Activated CD4-positive, alpha-beta T cell treated with anti-CD3 and anti-CD28 coated beads for 36 hours (primary cell): ENCODE measurements at regions of chr12 and their contacts with region 1.

Region 1: GRCh38 chr12:87233671-87234070 is 795.5 kb downstream of the C12orf50 start:
- DNase-seq: no peak
- ATAC-seq: no peak
- H3K4me3 Mint-ChIP-seq: no peak overlapping the region
- H3K27ac Mint-ChIP-seq: no peak overlapping the region
- H3K4me1 Mint-ChIP-seq: no peaks in the 10 kb centered on the region
- H3K27me3 Mint-ChIP-seq: no peaks in the 10 kb centered on the region

Region 2: GRCh38 chr12:86373813-86374212 is 859.9 kb before region 1 on chr12:
- CTCF ChIA-PET with region 1: no interaction called
- POLR2A ChIA-PET with region 1: no interaction called
- intact Hi-C with region 1: loop called in 1 of 2 experiments (anchors 5 kb)
- DNase-seq: no peak
- ATAC-seq: no peak
- H3K4me3 Mint-ChIP-seq: no peak overlapping the region
- H3K27ac Mint-ChIP-seq: no peak overlapping the region
- H3K4me1 Mint-ChIP-seq: no peaks in the 10 kb centered on the region
- H3K27me3 Mint-ChIP-seq: no peaks in the 10 kb centered on the region

Region 3: DNA sequence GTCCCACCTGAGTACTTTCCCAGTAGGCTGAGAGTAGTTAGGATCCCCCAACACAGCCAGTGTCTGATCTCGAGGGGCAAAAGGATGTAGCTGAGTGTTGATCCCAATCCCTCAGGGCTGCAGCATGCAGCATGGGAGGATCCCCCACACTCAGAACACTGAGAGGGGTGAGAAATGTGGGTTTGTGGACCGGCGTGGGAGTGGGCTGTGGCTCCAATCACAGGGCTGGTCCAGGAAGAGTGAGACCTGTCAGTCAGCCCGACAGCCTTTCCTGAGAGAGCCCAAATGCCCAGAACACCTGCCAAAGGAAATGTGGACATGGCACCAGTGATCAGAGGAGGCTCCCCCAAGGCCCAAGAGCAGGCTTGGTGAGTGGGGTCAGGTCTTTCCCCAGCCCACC is 749.2 kb before region 1 on chr12:
- CTCF ChIA-PET with region 1: no interaction called
- POLR2A ChIA-PET with region 1: no interaction called
- intact Hi-C with region 1: no loop called
- DNase-seq: no peak
- ATAC-seq: no peak
- H3K4me3 Mint-ChIP-seq: no peak overlapping the region
- H3K27ac Mint-ChIP-seq: no peak overlapping the region
- H3K4me1 Mint-ChIP-seq: no peaks in the 10 kb centered on the region
- H3K27me3 Mint-ChIP-seq: no peaks in the 10 kb centered on the region